WTC11 (cell line): ENCODE measurements at regions of chr17 and their contacts with region 1.

Region 1: DNA sequence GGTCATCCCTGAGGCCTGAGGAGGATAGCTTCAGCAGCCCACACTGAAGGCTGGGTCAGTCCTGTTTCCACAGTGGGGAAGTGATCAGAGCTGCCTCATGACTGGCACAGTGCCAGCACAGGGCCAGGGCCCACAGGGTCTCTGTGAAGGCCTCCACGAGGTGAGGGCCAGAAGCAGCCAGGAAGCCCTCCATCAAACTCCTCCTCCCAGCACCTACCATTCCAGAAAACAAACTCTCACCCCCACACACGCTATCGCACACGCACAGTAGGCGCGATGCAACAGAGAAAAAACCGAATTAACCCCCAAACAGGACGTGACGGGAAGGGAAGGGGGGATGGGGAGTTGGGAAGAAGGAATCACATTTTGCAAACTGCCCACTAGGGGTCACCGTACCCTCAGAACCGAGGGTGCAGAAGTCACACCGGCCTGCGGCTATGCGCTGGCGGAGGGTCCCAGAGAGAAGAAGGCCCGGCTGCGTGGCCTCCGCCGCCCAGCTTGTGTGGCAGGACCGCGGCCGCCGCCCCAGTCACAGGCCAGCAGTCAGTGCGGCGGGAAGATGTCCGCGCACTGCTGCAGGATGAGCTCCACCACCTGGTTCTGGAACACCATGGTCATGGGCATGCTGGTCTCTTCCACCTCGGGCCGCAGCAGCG is 37.6 kb downstream of the ARHGAP27 start:
- DNase-seq: peak; percentile 88
- ATAC-seq: peak; percentile 81
- H3K4me3 Mint-ChIP-seq: peak overlapping the region; percentile 34
- H3K27ac Mint-ChIP-seq: no peak overlapping the region
- H3K4me1 Mint-ChIP-seq: peaks cover 15% of the 10 kb centered on the region
- H3K27me3 Mint-ChIP-seq: peaks cover 3% of the 10 kb centered on the region; the same call in 1 of the 2 replicates
- CTCF ChIP-seq: peak; percentile 71

Region 2: DNA sequence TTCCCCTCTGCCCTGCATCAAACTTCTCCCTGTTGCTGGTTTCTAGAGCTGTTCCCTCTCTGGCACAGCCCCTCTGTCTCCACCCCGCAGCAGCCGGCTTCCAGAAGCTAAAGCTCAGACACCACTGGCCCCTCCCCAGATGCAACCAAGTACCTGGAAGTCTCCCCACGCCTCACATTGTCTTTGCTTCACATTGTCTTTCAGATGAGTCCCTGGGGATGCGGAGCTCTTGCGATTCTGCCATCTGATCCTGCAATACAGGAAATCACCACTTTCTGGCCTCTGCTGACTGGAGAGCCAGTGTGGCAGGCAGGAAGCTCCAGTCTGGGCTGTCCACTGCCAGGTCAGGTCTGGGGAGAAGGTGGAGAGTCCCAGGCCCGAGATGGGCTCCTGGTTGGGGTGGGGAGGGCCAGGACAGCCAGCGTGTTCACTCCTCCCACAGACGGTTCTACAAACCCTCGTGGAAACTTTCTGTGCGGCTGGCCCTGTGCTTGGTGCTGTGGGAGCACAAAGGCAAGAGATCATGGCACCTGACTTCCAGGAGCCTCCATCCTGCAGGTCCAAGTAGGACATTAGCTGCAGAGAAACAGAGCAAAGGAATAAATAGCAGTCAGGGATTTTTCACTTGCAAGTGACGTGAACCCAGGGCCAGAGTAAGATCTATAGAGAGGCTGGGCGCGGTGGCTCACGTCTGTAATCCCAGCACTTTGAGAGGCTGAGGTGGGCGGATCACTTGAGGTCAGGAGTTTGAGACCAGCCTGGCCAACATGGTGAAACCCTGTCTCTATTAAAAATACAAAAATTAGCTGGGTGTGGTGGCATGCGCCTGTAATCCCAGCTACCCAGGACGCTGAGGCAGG is 30.3 kb before region 1 on chr17:
- CTCF ChIA-PET with region 1: interaction called, 11 read pairs
- POLR2A ChIA-PET with region 1: no interaction called
- DNase-seq: peak; percentile 79
- ATAC-seq: peak; percentile 98
- H3K4me3 Mint-ChIP-seq: peak overlapping the region; percentile 36
- H3K27ac Mint-ChIP-seq: peak overlapping the region; percentile 97
- H3K4me1 Mint-ChIP-seq: peaks cover 39% of the 10 kb centered on the region
- H3K27me3 Mint-ChIP-seq: peaks cover 6% of the 10 kb centered on the region
- CTCF ChIP-seq: no peak

Region 3: GRCh38 chr17:45377401-45377800 is 17.6 kb before region 1 on chr17:
- CTCF ChIA-PET with region 1: no interaction called
- POLR2A ChIA-PET with region 1: no interaction called
- DNase-seq: no peak
- ATAC-seq: no peak
- H3K4me3 Mint-ChIP-seq: no peak overlapping the region
- H3K27ac Mint-ChIP-seq: no peak overlapping the region; the same call in 1 of the 2 replicates
- H3K4me1 Mint-ChIP-seq: peaks cover 31% of the 10 kb centered on the region
- H3K27me3 Mint-ChIP-seq: peaks cover 10% of the 10 kb centered on the region
- CTCF ChIP-seq: no peak

Region 4: GRCh38 chr17:45410144-45411091 is 15.4 kb after region 1 on chr17:
- CTCF ChIA-PET with region 1: interaction called, 19 read pairs
- POLR2A ChIA-PET with region 1: no interaction called
- DNase-seq: no peak
- ATAC-seq: no peak
- H3K4me3 Mint-ChIP-seq: no peak overlapping the region
- H3K27ac Mint-ChIP-seq: 0 out of 2 replicates have a peak overlapping the region, but pooled peaks have one; percentile 57
- H3K4me1 Mint-ChIP-seq: peaks cover 38% of the 10 kb centered on the region
- H3K27me3 Mint-ChIP-seq: peaks cover 3% of the 10 kb centered on the region; the same call in 1 of the 2 replicates
- CTCF ChIP-seq: no peak